Heart left ventricle (tissue), 16 donors: ENCODE measurements at regions of chr11 and their contacts with region 1.

Region 1: GRCh38 chr11:131579932-131580387 is 209.5 kb downstream of the NTM start:
- DNase-seq: no peak
- ATAC-seq: peak in 2 of 4 donors; percentile 36 to 55
- H3K4me3 ChIP-seq: no peak overlapping the region
- H3K27ac ChIP-seq: no peak overlapping the region
- H3K4me1 ChIP-seq: no peaks in the 10 kb centered on the region
- H3K27me3 ChIP-seq: peaks cover 0 to 12% (median 0%) of the 10 kb centered on the region in 9 donors
- CTCF ChIP-seq: peak in 7 of 12 donors; percentile 11 to 41 (median 24)
- POLR2A ChIP-seq: no peak

Region 2: DNA sequence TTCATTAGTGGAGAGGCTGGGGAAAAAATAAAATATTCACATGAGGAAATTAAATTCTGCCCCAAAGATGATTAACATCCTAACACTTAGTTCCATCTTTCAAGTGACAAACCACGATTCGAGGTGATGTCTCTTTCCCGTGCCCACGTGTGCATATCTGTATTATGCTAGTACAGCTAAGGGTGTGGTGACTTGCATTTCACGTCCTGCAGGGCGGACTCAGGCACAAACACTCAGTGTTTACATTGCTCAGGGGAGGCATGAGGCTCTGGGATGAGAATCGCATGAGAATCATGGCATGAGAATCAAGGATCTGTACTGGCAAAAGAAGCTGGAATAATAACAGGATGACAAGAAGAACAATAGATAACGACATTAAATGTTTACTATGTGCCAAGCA is 30.2 kb before region 1 on chr11:
- intact Hi-C with region 1: loop called in 1 of 10 experiments (anchors 2 kb)
- DNase-seq: no peak
- ATAC-seq: no peak
- H3K4me3 ChIP-seq: no peak overlapping the region
- H3K27ac ChIP-seq: no peak overlapping the region
- H3K4me1 ChIP-seq: no peaks in the 10 kb centered on the region
- H3K27me3 ChIP-seq: peaks cover 0 to 41% (median 0%) of the 10 kb centered on the region in 9 donors
- CTCF ChIP-seq: no peak
- POLR2A ChIP-seq: no peak

Region 3: GRCh38 chr11:131668500-131669400 is 88.8 kb after region 1 on chr11:
- intact Hi-C with region 1: loop called in 5 of 10 experiments (anchors 2 to 10 kb)
- DNase-seq: peak in 1 of 5 donors; percentile 45
- ATAC-seq: no peak
- H3K4me3 ChIP-seq: no peak overlapping the region
- H3K27ac ChIP-seq: no peak overlapping the region
- H3K4me1 ChIP-seq: peaks cover 0 to 3% (median 0%) of the 10 kb centered on the region in 12 donors
- H3K27me3 ChIP-seq: peaks cover 0 to 12% (median 0%) of the 10 kb centered on the region in 9 donors
- CTCF ChIP-seq: peak; percentile 27 to 64 (median 51)
- POLR2A ChIP-seq: no peak

Region 4: GRCh38 chr11:131867457-131868257 is 287.7 kb after region 1 on chr11:
- intact Hi-C with region 1: no loop called
- DNase-seq: peak; percentile 64 to 81 (median 71)
- ATAC-seq: peak; percentile 42 to 91 (median 78)
- H3K4me3 ChIP-seq: no peak overlapping the region
- H3K27ac ChIP-seq: no peak overlapping the region
- H3K4me1 ChIP-seq: no peaks in the 10 kb centered on the region
- H3K27me3 ChIP-seq: peaks cover 0 to 2% (median 0%) of the 10 kb centered on the region in 9 donors
- CTCF ChIP-seq: peak; percentile 32 to 74 (median 64)
- POLR2A ChIP-seq: no peak